Ovary (tissue), 10 donors: ENCODE measurements at regions of chr1 and their contacts with region 1.

Region 1: GRCh38 chr1:109877320-109877771 is 33.3 kb upstream of the CSF1 start:
- DNase-seq: peak; percentile 67 to 79 (median 73)
- H3K4me3 ChIP-seq: no peak overlapping the region
- H3K27ac ChIP-seq: peak overlapping the region; percentile 26 to 80
- H3K4me1 ChIP-seq: peaks cover 12% of the 10 kb centered on the region
- H3K27me3 ChIP-seq: no peaks in the 10 kb centered on the region
- CTCF ChIP-seq: peak in 1 of 3 donors; percentile 15
- EP300 ChIP-seq: no peak
- POLR2A ChIP-seq: no peak

Region 2: GRCh38 chr1:109821221-109821669 is 56.1 kb before region 1 on chr1:
- intact Hi-C with region 1: loop called in 2 of 4 experiments (anchors 5 to 10 kb)
- DNase-seq: peak in 1 of 5 donors; percentile 31
- H3K4me3 ChIP-seq: no peak overlapping the region
- H3K27ac ChIP-seq: no peak overlapping the region
- H3K4me1 ChIP-seq: peaks cover 8% of the 10 kb centered on the region
- H3K27me3 ChIP-seq: no peaks in the 10 kb centered on the region
- CTCF ChIP-seq: no peak
- EP300 ChIP-seq: no peak
- POLR2A ChIP-seq: no peak

Region 3: GRCh38 chr1:109910123-109910962 is 33.0 kb after region 1 on chr1 and contains the start of gene CSF1:
- intact Hi-C with region 1: loop called in 1 of 4 experiments (anchors 5 kb)
- DNase-seq: peak; percentile 87 to 94 (median 92)
- H3K4me3 ChIP-seq: peak within 1 kb of the TSS; percentile 87
- H3K27ac ChIP-seq: peak within 1 kb of the TSS; percentile 63 to 68
- H3K4me1 ChIP-seq: peaks cover 11% of the 10 kb centered on the region
- H3K27me3 ChIP-seq: no peaks in the 10 kb centered on the region
- CTCF ChIP-seq: no peak
- EP300 ChIP-seq: no peak
- POLR2A ChIP-seq: peak; percentile 72
- total RNA-seq, gene CSF1: 24.2 to 57.6 (median 44.3) TPM

Region 4: DNA sequence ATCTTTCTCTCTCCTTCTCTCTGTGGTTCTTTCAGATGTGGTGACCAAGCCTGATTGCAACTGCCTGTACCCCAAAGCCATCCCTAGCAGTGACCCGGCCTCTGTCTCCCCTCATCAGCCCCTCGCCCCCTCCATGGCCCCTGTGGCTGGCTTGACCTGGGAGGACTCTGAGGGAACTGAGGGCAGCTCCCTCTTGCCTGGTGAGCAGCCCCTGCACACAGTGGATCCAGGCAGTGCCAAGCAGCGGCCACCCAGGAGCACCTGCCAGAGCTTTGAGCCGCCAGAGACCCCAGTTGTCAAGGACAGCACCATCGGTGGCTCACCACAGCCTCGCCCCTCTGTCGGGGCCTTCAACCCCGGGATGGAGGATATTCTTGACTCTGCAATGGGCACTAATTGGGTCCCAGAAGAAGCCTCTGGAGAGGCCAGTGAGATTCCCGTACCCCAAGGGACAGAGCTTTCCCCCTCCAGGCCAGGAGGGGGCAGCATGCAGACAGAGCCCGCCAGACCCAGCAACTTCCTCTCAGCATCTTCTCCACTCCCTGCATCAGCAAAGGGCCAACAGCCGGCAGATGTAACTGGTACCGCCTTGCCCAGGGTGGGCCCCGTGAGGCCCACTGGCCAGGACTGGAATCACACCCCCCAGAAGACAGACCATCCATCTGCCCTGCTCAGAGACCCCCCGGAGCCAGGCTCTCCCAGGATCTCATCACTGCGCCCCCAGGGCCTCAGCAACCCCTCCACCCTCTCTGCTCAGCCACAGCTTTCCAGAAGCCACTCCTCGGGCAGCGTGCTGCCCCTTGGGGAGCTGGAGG is 46.0 kb after region 1 on chr1:
- intact Hi-C with region 1: loop called in 1 of 4 experiments (anchors 5 kb)
- DNase-seq: peak in 2 of 5 donors; percentile 26 to 31
- H3K4me3 ChIP-seq: no peak overlapping the region
- H3K27ac ChIP-seq: no peak overlapping the region
- H3K4me1 ChIP-seq: peaks cover 7% of the 10 kb centered on the region
- H3K27me3 ChIP-seq: no peaks in the 10 kb centered on the region
- CTCF ChIP-seq: peak in 1 of 3 donors; percentile 18
- EP300 ChIP-seq: no peak
- POLR2A ChIP-seq: no peak

Region 5: DNA sequence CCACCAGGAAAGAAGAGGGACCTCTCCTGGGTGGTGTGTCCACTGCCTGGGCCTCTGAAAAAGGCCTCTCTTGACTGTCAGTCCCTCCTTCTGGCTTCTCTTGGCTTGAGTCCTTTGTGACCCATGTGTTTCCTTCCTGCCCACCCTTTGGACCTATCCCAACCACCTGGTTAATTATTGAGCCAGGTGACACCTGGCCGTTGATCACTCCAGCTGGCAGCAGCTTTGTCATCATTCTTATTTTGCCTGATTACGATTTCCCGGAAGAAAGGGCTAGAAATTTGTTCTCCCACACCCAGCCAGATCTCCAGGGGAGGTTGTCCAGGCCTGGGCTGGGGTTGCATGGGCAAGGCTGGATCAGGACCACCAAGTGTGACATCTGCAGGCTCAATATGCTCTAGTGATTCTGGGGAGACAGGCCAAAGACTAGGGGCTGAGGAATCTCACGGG is 58.1 kb after region 1 on chr1:
- intact Hi-C with region 1: no loop called
- DNase-seq: no peak
- H3K4me3 ChIP-seq: no peak overlapping the region
- H3K27ac ChIP-seq: no peak overlapping the region
- H3K4me1 ChIP-seq: peaks cover 12% of the 10 kb centered on the region
- H3K27me3 ChIP-seq: no peaks in the 10 kb centered on the region
- CTCF ChIP-seq: no peak
- EP300 ChIP-seq: no peak
- POLR2A ChIP-seq: no peak